Mammary epithelial cell (primary cell): ENCODE measurements at regions of chr20 and their contacts with region 1.

Region 1: GRCh38 chr20:49361862-49362660 is 84.2 kb upstream of the ZNFX1 start:
- DNase-seq: no peak
- H3K4me3 ChIP-seq: no peak overlapping the region
- H3K27ac ChIP-seq: no peak overlapping the region
- H3K4me1 ChIP-seq: no peaks in the 10 kb centered on the region
- H3K27me3 ChIP-seq: no peaks in the 10 kb centered on the region
- CTCF ChIP-seq: no peak

Region 2: GRCh38 chr20:49435659-49436058 is 73.6 kb after region 1 on chr20:
- CTCF ChIA-PET with region 1: no interaction called
- dilution Hi-C with region 1: loop called (anchors 10 kb)
- in situ Hi-C with region 1: no loop called
- intact Hi-C with region 1: no loop called
- DNase-seq: no peak
- H3K4me3 ChIP-seq: no peak overlapping the region
- H3K27ac ChIP-seq: no peak overlapping the region
- H3K4me1 ChIP-seq: peaks cover 10% of the 10 kb centered on the region
- H3K27me3 ChIP-seq: peaks cover 4% of the 10 kb centered on the region
- CTCF ChIP-seq: peak in 1 of 2 donors; percentile 26